Activated CD4-positive, alpha-beta T cell treated with anti-CD3 and anti-CD28 coated beads for 36 hours (primary cell): ENCODE measurements at regions of chr1 and their contacts with region 1.

Region 1: DNA sequence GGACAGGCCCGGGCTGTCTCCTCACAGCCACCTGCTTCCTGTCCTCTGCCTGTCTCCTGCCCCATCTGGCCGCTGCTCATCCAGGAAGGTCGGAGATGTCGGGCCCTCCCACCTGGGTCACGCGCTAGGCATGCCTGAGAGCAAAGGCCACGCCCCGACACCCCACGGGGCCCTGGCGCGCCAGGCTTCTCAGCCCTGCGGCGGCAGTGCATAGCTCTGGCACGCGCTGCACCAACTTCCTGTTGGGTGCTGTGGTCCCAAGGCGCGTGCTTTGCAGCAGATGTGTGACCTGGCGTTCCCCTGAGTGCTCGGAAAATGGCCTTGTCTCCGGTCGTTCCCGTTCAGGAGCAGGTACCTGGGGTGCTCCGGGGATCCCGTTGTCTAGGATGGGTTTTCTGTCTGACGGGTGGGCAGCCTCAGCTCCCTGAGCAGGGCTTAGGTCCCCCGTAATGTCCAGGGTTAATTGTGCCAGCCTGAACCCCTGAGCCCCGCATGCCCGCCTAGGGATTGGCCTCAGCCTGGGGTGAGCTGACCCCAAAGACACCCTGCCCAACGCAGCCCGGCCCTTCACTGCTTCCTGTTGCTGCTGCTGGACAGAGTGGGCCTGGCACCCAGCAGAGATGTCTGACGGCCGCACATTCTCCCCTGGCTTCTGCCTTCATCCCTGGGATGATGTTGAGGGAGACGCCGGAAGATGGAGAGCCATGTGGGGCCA is 19.4 kb upstream of the KCNAB2 start:
- DNase-seq: peak; percentile 97
- ATAC-seq: peak; percentile 81
- H3K4me3 Mint-ChIP-seq: peak overlapping the region; percentile 97
- H3K27ac Mint-ChIP-seq: peak overlapping the region; percentile 97
- H3K4me1 Mint-ChIP-seq: peaks cover 40% of the 10 kb centered on the region
- H3K27me3 Mint-ChIP-seq: no peaks in the 10 kb centered on the region

Region 2: DNA sequence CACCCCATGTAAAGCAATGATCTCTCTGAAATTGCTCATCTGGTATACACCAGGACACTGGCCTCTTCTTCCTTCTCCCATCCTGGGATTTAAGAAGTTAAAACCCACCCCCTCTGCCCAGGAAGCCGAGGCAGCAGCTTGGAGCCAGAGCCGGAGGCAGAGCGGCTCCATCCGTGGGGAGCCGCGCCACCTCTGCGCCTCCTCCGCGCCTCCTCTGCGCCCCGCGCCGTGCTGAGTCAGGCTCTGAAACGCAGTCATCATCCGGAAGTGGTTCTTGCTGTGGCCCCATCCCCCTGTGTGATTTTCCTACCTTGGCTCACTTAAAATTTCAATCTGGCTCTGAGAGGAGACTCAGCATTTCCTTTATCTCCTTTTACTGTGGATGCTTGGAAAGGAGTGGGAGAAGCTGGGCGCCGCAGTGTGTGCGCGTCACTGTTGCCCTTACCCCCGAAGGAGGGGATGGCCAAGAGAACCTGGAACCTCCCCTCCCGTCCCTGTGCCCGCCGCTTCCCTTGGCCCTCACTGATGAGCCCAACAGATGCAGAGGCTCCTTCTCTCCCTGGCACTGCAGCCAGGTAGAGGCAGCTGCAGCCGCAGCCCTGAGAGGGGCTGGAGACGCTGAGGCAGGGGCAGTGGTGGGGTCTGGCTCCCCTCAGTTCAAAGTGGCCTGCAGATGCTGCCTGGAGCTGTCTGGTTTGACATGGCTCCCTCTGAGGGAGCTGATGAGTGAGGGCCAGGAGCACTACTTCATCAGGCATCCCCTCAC is 18.8 kb before region 1 on chr1:
- CTCF ChIA-PET with region 1: interaction called, 3 read pairs
- POLR2A ChIA-PET with region 1: interaction called, 3 read pairs
- intact Hi-C with region 1: loop called in 1 of 2 experiments (anchors 1 kb)
- DNase-seq: peak; percentile 67
- ATAC-seq: peak; percentile 91
- H3K4me3 Mint-ChIP-seq: no peak overlapping the region
- H3K27ac Mint-ChIP-seq: peak overlapping the region; percentile 13
- H3K4me1 Mint-ChIP-seq: peaks cover 14% of the 10 kb centered on the region
- H3K27me3 Mint-ChIP-seq: no peaks in the 10 kb centered on the region

Region 3: GRCh38 chr1:6037338-6037762 is 11.1 kb after region 1 on chr1:
- CTCF ChIA-PET with region 1: interaction called, 3 read pairs
- POLR2A ChIA-PET with region 1: interaction called, 4 read pairs
- intact Hi-C with region 1: loop called in 1 of 2 experiments (anchors 1 kb)
- DNase-seq: peak; percentile 44
- ATAC-seq: peak; percentile 76
- H3K4me3 Mint-ChIP-seq: no peak overlapping the region
- H3K27ac Mint-ChIP-seq: no peak overlapping the region
- H3K4me1 Mint-ChIP-seq: peaks cover 48% of the 10 kb centered on the region
- H3K27me3 Mint-ChIP-seq: no peaks in the 10 kb centered on the region

Region 4: GRCh38 chr1:6199298-6200187 is 173.3 kb after region 1 on chr1 and contains the start of gene RPL22:
- CTCF ChIA-PET with region 1: no interaction called
- POLR2A ChIA-PET with region 1: no interaction called
- intact Hi-C with region 1: loop called (anchors 1 to 5 kb)
- DNase-seq: peak; percentile 99
- ATAC-seq: peak; percentile 99
- H3K4me3 Mint-ChIP-seq: peak within 1 kb of the TSS; percentile 99
- H3K27ac Mint-ChIP-seq: peak within 1 kb of the TSS; percentile 96
- H3K4me1 Mint-ChIP-seq: peaks cover 39% of the 10 kb centered on the region
- H3K27me3 Mint-ChIP-seq: no peaks in the 10 kb centered on the region
- total RNA-seq, gene RPL22: 392 to 475 TPM

Region 5: DNA sequence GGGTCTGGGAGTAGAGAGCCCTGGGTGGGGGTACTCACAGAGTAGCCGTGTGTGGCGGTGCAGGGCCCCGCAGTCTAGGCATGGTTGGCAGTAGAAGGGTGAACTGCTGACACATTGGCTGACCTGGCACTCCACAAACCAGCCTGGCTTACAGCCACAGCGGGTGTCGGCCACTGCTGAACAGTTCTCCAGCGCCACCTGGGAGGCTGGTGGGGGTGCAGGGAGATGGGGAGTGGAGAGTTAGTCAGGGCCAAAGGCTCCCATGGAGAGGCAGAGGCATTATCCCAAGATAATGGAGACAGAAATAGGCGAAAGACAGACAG is 438.2 kb after region 1 on chr1:
- CTCF ChIA-PET with region 1: no interaction called
- POLR2A ChIA-PET with region 1: no interaction called
- intact Hi-C with region 1: loop called in 1 of 2 experiments (anchors 2 kb)
- DNase-seq: peak; percentile 80
- ATAC-seq: peak; percentile 21
- H3K4me3 Mint-ChIP-seq: peak overlapping the region; percentile 84
- H3K27ac Mint-ChIP-seq: peak overlapping the region; percentile 83
- H3K4me1 Mint-ChIP-seq: peaks cover 50% of the 10 kb centered on the region
- H3K27me3 Mint-ChIP-seq: no peaks in the 10 kb centered on the region